ENCODE measurements at regions of chr9 and their contacts with region 1.

Region 1: GRCh38 chr9:36023260-36024048 is 13.3 kb upstream of the RECK start:
- DNase-seq: peak; percentile 81
- H3K4me3 Mint-ChIP-seq: no peak overlapping the region
- H3K27ac Mint-ChIP-seq: peak overlapping the region; percentile 7
- H3K4me1 Mint-ChIP-seq: no peaks in the 10 kb centered on the region
- H3K27me3 Mint-ChIP-seq: peaks cover 15% of the 10 kb centered on the region

Region 2: GRCh38 chr9:35903049-35903448 is 120.4 kb before region 1 on chr9:
- CTCF ChIA-PET with region 1: interaction called, 44 read pairs
- DNase-seq: peak; percentile 54
- H3K4me3 Mint-ChIP-seq: no peak overlapping the region
- H3K27ac Mint-ChIP-seq: no peak overlapping the region
- H3K4me1 Mint-ChIP-seq: peaks cover 18% of the 10 kb centered on the region
- H3K27me3 Mint-ChIP-seq: peaks cover 22% of the 10 kb centered on the region

Region 3: DNA sequence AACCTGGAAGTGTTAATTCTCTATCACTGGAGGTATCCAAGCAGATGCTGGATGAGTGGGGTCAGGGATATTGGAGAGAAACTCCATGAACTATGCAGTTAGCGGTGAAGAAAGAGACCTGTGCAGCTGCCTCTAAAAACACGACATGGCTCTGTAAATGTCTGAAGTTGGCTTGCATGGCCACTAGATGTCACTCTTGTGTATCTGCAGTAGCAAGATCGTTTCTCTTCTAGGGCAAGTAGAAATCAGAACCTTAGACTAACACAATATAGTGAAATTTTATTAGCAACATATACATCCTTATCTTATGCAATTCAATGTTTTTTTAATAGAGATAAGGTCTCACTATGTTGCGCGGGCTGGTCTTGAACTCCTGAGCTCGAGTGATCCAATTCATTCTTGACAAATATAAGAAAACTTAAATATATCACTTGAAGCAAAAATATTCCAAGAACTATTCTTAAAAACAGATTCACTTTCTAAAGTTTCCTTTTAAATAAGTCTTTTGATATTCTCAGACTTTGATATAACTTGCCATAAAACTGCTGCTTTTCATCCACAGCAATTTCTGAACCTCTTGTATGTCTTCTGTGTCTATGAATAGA is 68.4 kb before region 1 on chr9:
- CTCF ChIA-PET with region 1: interaction called, 99 read pairs
- DNase-seq: peak; percentile 64
- H3K4me3 Mint-ChIP-seq: no peak overlapping the region
- H3K27ac Mint-ChIP-seq: no peak overlapping the region
- H3K4me1 Mint-ChIP-seq: peaks cover 3% of the 10 kb centered on the region
- H3K27me3 Mint-ChIP-seq: peaks cover 27% of the 10 kb centered on the region

Region 4: GRCh38 chr9:36008774-36009300 is 14.6 kb before region 1 on chr9:
- CTCF ChIA-PET with region 1: interaction called, 87 read pairs
- DNase-seq: peak; percentile 74
- H3K4me3 Mint-ChIP-seq: no peak overlapping the region
- H3K27ac Mint-ChIP-seq: no peak overlapping the region
- H3K4me1 Mint-ChIP-seq: peaks cover 17% of the 10 kb centered on the region
- H3K27me3 Mint-ChIP-seq: peaks cover 50% of the 10 kb centered on the region

Region 5: DNA sequence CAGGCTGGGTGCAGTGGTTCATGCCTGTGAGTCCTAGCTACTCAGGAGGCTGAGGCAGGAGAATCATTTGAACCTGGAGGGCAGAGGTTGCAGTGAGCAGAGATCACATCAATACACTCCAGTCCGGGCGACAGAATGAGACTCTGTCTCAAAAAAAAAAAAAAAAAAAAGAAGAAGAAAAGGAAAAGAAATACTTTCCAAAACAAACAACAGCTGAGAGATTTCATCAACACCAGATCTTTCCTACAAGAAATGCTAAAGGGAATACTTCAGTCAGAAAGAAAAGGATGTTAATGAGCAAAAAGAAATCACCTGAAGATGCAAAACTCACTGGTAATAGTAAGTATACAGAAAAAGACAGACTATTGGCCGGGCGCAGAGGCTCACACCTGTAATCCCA is 154.1 kb after region 1 on chr9:
- CTCF ChIA-PET with region 1: no interaction called
- DNase-seq: no peak
- H3K4me3 Mint-ChIP-seq: no peak overlapping the region
- H3K27ac Mint-ChIP-seq: no peak overlapping the region
- H3K4me1 Mint-ChIP-seq: peaks cover 10% of the 10 kb centered on the region
- H3K27me3 Mint-ChIP-seq: peaks cover 33% of the 10 kb centered on the region

Measured in activated naive CD4-positive, alpha-beta T cell treated with anti-CD3 and anti-CD28 coated beads, Interleukin-2, amount 10 ng/mL, durations not matched to agents 7 days and 5 days (primary cell).